ENCODE measurements at regions of chr2 and their contacts with region 1.

Region 1: DNA sequence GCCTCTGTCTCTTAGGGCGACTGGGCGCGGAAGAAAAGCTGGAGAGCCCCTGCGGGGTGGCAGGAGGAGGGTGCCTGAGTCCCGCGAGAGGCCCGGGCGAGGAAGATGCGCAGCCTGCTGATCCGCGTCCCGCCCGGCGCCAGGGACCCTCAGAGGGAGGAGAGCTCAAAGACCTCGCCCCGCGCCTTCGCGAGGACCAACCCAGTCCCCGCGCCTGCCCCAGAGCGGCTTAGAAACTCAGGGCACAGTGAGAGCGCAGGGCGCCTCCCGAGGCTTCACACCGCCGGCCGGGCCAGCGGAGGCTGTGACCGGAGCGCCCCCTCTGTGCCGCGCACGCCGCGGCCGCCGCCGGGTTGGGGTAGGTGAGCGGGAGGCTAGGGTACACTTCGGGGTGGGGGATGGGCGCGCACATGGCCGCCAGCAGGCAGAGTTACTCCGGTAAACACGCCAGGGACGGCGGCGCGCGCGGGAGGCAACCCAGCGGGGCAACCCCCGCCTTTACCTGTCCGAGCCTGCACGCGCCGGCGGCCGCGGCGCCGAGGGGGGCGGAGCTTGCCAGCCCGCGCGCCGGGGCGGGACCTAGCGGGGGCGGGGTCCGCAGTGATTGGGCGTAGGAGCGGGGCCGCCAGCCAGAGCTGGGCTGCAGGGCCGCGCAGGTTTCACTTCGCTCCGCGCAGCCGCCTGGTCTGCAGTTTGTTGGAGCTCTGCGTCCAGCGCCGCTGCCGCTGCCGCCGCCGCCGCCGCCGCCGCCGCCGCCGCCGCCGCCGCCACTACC is at the start of gene BCL2L11:
- DNase-seq: peak; percentile 93
- ATAC-seq: peak; percentile 67
- H3K4me3 Mint-ChIP-seq: peak within 1 kb of the TSS; percentile 90
- H3K27ac Mint-ChIP-seq: peak within 1 kb of the TSS; percentile 85
- H3K4me1 Mint-ChIP-seq: peaks cover 60% of the 10 kb centered on the region
- H3K27me3 Mint-ChIP-seq: peaks cover 18% of the 10 kb centered on the region
- total RNA-seq, gene BCL2L11: 18.2 to 28.6 TPM

Region 2: GRCh38 chr2:110748489-110748867 is 372.0 kb before region 1 on chr2:
- CTCF ChIA-PET with region 1: no interaction called
- POLR2A ChIA-PET with region 1: no interaction called
- intact Hi-C with region 1: loop called in 1 of 2 experiments (anchors 5 kb)
- DNase-seq: peak; percentile 86
- ATAC-seq: peak; percentile 99
- H3K4me3 Mint-ChIP-seq: no peak overlapping the region
- H3K27ac Mint-ChIP-seq: no peak overlapping the region
- H3K4me1 Mint-ChIP-seq: peaks cover 18% of the 10 kb centered on the region
- H3K27me3 Mint-ChIP-seq: peaks cover 67% of the 10 kb centered on the region

Region 3: GRCh38 chr2:110843959-110844510 is 276.4 kb before region 1 on chr2:
- CTCF ChIA-PET with region 1: no interaction called
- POLR2A ChIA-PET with region 1: no interaction called
- intact Hi-C with region 1: loop called in 1 of 2 experiments (anchors 1 kb)
- DNase-seq: peak; percentile 35
- ATAC-seq: peak; percentile 27
- H3K4me3 Mint-ChIP-seq: no peak overlapping the region
- H3K27ac Mint-ChIP-seq: no peak overlapping the region
- H3K4me1 Mint-ChIP-seq: peaks cover 58% of the 10 kb centered on the region
- H3K27me3 Mint-ChIP-seq: peaks cover 33% of the 10 kb centered on the region

Region 4: DNA sequence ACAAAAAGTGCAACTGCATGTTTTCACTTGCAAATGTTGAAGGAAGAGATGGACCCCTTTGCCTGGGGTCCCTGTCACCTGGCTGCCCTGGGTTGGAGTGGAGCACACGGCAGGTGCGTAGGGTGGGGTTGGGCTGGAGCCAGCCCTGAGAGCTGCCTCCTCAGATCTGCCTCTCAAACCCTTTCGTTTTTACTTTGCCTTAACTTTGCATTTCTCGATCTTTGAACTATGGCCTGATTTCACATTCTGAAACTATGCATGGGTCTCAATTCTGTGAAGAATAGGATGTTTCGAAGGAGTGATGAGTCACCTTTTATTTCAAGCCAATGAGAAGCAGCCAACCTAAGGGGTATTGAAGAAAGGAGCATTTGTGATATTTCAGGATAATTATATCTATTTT is 255.3 kb before region 1 on chr2:
- CTCF ChIA-PET with region 1: interaction called, 3 read pairs
- POLR2A ChIA-PET with region 1: interaction called, 3 read pairs
- intact Hi-C with region 1: loop called in 1 of 2 experiments (anchors 1 kb)
- DNase-seq: peak; percentile 67
- ATAC-seq: peak; percentile 80
- H3K4me3 Mint-ChIP-seq: no peak overlapping the region
- H3K27ac Mint-ChIP-seq: no peak overlapping the region
- H3K4me1 Mint-ChIP-seq: peaks cover 46% of the 10 kb centered on the region
- H3K27me3 Mint-ChIP-seq: peaks cover 54% of the 10 kb centered on the region

Region 5: DNA sequence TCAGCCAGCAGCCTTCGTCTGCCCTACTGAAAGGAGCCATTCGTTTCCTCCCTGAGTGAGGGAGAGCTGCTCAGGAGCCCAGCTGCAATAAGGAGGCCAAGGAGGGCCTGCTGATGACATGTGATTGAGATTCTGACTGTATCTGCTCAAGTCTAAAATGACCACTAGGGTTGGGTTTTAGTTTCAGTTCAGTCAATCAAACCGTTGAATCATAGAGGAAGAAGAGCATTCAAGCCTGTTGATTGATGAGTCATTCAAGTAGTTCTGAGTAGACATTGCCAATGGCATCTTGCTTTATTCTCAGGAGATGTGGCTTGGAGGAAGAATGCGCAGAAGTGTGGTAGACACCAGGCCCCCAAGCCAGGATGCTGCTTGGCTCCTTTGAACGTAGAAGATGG is 19.7 kb before region 1 on chr2:
- CTCF ChIA-PET with region 1: interaction called, 3 read pairs
- POLR2A ChIA-PET with region 1: no interaction called
- intact Hi-C with region 1: loop called in 1 of 2 experiments (anchors 1 kb)
- DNase-seq: peak; percentile 44
- ATAC-seq: peak; percentile 92
- H3K4me3 Mint-ChIP-seq: no peak overlapping the region
- H3K27ac Mint-ChIP-seq: no peak overlapping the region
- H3K4me1 Mint-ChIP-seq: peaks cover 22% of the 10 kb centered on the region
- H3K27me3 Mint-ChIP-seq: peaks cover 51% of the 10 kb centered on the region

Region 6: DNA sequence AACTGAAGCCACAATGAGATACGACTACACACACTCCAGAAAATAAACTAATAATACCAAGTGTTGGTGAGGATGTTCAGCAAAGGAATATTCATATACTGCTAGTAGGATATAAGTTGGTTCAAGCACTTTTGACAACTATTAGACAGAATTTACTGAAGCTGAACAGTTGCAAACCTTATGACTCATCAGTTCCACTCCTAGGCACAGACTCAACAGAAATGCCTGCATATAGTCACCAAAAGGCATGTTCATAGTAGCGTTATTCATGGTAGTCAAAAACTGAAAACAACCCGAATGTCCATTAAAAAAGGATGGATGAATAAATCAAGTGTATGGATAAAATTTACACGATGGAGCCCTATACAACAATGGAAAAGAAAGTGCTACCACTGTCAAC is 531.6 kb after region 1 on chr2:
- CTCF ChIA-PET with region 1: no interaction called
- POLR2A ChIA-PET with region 1: no interaction called
- intact Hi-C with region 1: no loop called
- DNase-seq: no peak
- ATAC-seq: peak; percentile 49
- H3K4me3 Mint-ChIP-seq: no peak overlapping the region
- H3K27ac Mint-ChIP-seq: no peak overlapping the region
- H3K4me1 Mint-ChIP-seq: peaks cover 7% of the 10 kb centered on the region
- H3K27me3 Mint-ChIP-seq: peaks cover 20% of the 10 kb centered on the region

Region 7: DNA sequence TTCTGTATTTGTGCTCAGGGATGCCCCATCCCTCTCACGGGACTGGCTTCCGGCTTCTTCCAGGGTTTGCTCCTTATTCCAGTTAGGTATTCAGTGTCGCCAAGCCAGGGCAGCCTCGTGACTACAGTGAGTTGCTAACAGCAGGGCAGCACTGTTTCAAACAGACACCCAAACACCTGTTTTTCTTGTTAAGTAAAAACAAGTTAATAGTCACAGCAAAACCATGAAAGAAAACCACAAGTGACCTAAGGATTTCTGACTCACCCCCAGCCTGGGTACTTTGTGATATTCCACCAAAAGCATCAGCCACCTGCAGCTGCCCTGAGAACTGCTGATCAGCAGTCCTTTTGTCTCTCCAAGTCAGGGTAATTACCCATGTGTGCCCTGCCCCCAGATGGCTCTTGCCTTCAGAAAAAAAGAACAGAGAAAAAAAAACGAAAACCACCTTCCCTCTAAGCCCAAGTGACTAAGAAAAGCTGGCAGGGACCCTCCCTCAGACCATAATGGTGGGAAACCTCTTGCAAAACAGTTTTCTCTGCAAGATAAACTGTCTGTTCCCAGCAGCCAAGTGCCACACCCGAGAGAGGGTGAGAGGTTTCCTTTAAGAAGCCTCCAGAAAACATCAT is 585.4 kb after region 1 on chr2:
- CTCF ChIA-PET with region 1: no interaction called
- POLR2A ChIA-PET with region 1: no interaction called
- intact Hi-C with region 1: loop called (anchors 1 to 10 kb)
- DNase-seq: peak; percentile 78
- ATAC-seq: peak; percentile 90
- H3K4me3 Mint-ChIP-seq: no peak overlapping the region
- H3K27ac Mint-ChIP-seq: peak overlapping the region; percentile 58
- H3K4me1 Mint-ChIP-seq: peaks cover 39% of the 10 kb centered on the region
- H3K27me3 Mint-ChIP-seq: peaks cover 26% of the 10 kb centered on the region